Ovary (tissue), 10 donors: ENCODE measurements at regions of chr7 and their contacts with region 1.

Region 1: DNA sequence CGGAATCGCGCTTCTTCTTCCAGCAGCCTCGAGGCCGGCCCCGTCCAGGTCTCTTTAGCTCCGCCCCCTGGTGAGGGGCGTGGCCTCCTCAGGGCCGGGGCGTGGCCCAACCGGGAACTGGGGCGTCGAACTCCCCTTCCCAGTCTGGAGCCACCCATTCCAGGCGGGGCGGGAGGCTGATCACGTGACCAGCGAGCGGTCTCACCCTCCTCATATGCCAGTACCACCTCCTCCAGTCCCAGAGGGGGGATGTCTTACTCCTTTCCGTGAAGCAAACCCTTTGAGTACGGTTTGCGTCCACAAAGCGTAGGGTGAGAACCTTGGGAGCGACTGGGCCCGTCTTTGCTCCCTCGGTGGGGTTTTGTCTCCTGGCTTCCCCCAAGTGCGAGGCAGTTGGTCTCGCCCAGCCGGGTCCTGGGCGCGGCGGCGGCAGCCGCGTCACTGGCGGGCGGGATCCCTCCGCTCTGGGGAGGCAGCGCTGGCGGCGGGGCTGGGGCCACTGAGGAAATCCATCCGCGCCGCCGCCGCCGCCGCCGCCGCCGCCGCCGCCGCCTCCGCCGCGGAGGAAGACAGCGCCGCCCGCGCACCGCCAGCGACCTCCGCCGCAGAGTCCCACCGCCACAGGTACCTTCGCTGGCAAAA is at the start of gene GNB2:
- DNase-seq: peak; percentile 99 to 100 (median 100)
- H3K4me3 ChIP-seq: peak within 1 kb of the TSS; percentile 77
- H3K27ac ChIP-seq: peak within 1 kb of the TSS; percentile 96 to 97
- H3K4me1 ChIP-seq: peaks cover 1% of the 10 kb centered on the region
- H3K27me3 ChIP-seq: no peaks in the 10 kb centered on the region
- CTCF ChIP-seq: peak in 1 of 3 donors; percentile 33
- EP300 ChIP-seq: peak; percentile 65
- POLR2A ChIP-seq: peak; percentile 91
- total RNA-seq, gene GNB2: 109 to 281 (median 216) TPM

Region 2: GRCh38 chr7:100538654-100539435 is 134.6 kb before region 1 on chr7 and contains the start of gene AGFG2:
- intact Hi-C with region 1: loop called in 1 of 4 experiments (anchors 5 kb)
- DNase-seq: peak; percentile 100
- H3K4me3 ChIP-seq: peak within 1 kb of the TSS; percentile 88
- H3K27ac ChIP-seq: peak within 1 kb of the TSS; percentile 42 to 44
- H3K4me1 ChIP-seq: peaks cover 7% of the 10 kb centered on the region
- H3K27me3 ChIP-seq: no peaks in the 10 kb centered on the region
- CTCF ChIP-seq: no peak
- EP300 ChIP-seq: peak; percentile 65
- POLR2A ChIP-seq: peak; percentile 82
- total RNA-seq, gene AGFG2: 44.7 to 115 (median 61.5) TPM

Region 3: DNA sequence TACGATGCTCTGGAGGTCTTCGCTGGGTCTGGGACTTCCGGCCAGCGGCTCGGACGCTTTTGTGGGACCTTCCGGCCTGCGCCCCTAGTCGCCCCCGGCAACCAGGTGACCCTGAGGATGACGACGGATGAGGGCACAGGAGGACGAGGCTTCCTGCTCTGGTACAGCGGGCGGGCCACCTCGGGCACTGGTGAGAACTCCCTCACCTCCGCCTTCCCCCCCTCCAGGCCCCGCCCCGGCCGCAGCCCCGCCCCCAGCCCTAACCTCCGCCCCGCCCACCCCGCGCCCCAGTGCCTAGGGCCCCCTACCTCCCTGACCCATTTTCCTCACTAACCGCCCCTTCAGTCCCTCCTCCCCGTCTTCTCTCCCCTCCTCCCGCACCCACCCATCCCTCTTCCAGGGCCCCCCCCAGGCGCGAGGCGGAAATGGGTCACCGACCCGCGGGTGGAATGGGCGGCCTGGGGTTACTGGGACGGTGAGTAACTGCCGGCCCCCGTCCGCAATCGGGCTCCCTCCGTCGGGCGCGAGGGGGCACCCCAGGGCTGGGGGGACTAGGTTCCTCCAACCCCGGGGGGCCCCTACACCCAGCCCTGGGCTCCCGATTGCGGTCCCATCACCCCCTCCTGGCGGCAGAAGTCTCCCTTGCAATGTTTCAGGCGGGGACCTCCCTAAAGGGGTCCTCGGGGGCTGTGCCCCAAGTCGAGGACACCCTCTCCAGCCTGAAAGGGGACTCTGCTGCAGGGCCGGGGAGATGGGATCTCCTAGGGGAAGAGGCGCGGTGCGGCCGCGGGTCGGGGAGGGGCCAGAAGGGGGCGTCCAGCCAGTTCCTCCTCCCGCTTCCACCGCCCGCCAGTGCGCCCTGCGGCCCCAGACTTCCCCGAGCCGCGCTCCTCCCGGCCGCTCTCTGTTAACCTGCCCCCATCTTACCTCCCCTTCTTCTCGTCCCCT is 69.1 kb before region 1 on chr7:
- intact Hi-C with region 1: loop called in 2 of 4 experiments (anchors 5 kb)
- DNase-seq: peak; percentile 79 to 88 (median 85)
- H3K4me3 ChIP-seq: peak overlapping the region; percentile 75
- H3K27ac ChIP-seq: peak overlapping the region; percentile 83 to 86
- H3K4me1 ChIP-seq: peaks cover 19% of the 10 kb centered on the region
- H3K27me3 ChIP-seq: no peaks in the 10 kb centered on the region
- CTCF ChIP-seq: peak in 2 of 3 donors; percentile 39 to 76
- EP300 ChIP-seq: no peak
- POLR2A ChIP-seq: peak; percentile 81

Region 4: GRCh38 chr7:100611974-100612729 is 61.3 kb before region 1 on chr7 and contains the start of gene MOSPD3:
- intact Hi-C with region 1: loop called in 2 of 4 experiments (anchors 2 to 5 kb)
- DNase-seq: peak; percentile 99 to 100 (median 99)
- H3K4me3 ChIP-seq: peak within 1 kb of the TSS; percentile 48
- H3K27ac ChIP-seq: peak within 1 kb of the TSS; percentile 25 to 87
- H3K4me1 ChIP-seq: peaks cover 6% of the 10 kb centered on the region
- H3K27me3 ChIP-seq: no peaks in the 10 kb centered on the region
- CTCF ChIP-seq: no peak
- EP300 ChIP-seq: peak; percentile 86
- POLR2A ChIP-seq: peak; percentile 58
- total RNA-seq, gene MOSPD3: 9.4 to 27.7 (median 24.7) TPM